ENCODE measurements at regions of chr11 and their contacts with region 1.

Region 1: DNA sequence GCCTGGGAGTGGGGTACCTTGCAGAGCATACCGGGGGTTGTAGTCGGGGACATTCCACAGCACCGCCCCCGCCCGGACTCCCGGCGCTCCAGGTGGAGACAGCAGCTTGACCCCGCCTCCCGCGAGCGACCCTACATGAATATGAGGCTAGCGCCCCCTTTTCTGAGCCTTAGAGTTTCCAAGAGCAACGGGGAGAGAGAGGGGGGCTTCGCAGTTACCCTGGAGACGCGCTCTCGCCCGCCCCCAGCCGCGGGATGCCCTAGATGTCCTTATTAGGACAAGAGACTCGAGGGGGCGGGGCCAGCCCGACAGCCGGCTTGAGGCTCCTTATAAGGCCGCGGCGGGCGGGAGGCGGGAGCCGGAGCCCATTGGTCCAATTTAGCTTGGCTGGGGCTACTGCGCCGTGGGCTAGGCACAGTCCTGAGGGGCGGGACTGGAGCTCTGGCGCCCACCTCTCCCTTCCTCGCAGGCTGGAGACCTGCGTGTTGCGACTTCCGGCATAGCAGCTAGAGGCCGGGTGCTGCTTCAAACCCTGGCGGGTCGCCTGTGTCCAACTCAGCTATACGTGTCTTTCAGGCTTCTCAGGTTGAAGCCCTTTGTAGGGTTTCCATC is 927 bp upstream of the MUS81 start:
- DNase-seq: peak; percentile 99
- ATAC-seq: peak; percentile 73
- H3K4me3 Mint-ChIP-seq: peak overlapping the region; percentile 91
- H3K27ac Mint-ChIP-seq: peak overlapping the region; percentile 99
- H3K4me1 Mint-ChIP-seq: peaks cover 42% of the 10 kb centered on the region
- H3K27me3 Mint-ChIP-seq: no peaks in the 10 kb centered on the region

Region 2: DNA sequence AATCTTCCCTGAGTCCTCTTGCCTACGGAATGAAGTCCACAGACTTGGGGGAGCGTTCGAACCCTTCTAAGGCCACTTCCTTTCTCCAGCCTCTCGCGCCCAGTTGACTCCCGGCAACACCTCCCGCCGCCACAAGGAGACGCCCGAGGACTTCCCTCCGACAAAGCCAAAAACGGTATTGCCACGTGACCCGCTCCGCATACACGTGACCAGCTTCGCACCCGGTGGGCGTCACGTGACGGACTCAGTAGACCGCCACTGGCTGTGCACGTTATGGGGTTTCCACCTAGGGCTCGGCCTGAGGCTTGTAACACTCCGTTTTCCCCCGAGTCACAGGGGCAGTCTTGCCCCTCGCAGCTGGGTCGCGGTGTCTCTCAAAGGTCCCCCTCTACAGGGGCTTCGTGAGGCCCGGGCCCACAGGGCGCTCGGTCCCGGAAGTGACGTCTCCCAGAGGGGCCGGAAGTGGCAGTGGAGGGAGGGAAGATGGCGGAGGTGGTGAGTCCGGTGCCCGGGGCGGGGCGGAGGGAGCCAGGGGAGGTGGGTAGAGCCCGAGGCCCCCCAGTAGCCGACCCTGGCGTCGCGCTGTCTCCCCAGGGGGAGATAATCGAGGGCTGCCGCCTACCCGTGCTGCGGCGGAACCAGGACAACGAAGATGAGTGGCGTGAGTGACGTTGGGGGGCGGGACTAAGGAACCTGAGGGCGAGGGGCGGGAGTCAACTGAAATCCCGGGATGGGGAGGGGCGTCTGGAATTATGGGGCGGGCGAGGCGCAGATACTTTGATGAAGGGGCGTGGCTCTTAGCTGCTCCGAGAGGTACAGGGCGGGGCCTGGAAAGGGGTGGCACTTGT is 147.3 kb before region 1 on chr11 and contains the start of gene KAT5:
- CTCF ChIA-PET with region 1: interaction called, 29 read pairs
- POLR2A ChIA-PET with region 1: interaction called, 6 read pairs
- intact Hi-C with region 1: loop called in 1 of 2 experiments (anchors 1 kb)
- DNase-seq: peak; percentile 99
- ATAC-seq: peak; percentile 86
- H3K4me3 Mint-ChIP-seq: peak within 1 kb of the TSS; percentile 90
- H3K27ac Mint-ChIP-seq: peak within 1 kb of the TSS; percentile 96
- H3K4me1 Mint-ChIP-seq: peaks cover 27% of the 10 kb centered on the region
- H3K27me3 Mint-ChIP-seq: no peaks in the 10 kb centered on the region
- total RNA-seq, gene KAT5: 56.5 to 65.1 TPM

Region 3: GRCh38 chr11:65833297-65834030 is 25.8 kb before region 1 on chr11 and contains the start of gene SNX32:
- CTCF ChIA-PET with region 1: interaction called, 10 read pairs
- POLR2A ChIA-PET with region 1: interaction called, 11 read pairs
- intact Hi-C with region 1: loop called (anchors 1 kb)
- DNase-seq: peak; percentile 98
- ATAC-seq: peak; percentile 99
- H3K4me3 Mint-ChIP-seq: no peak within 1 kb of the TSS
- H3K27ac Mint-ChIP-seq: no peak within 1 kb of the TSS
- H3K4me1 Mint-ChIP-seq: peaks cover 22% of the 10 kb centered on the region
- H3K27me3 Mint-ChIP-seq: no peaks in the 10 kb centered on the region
- total RNA-seq, gene SNX32: 2.9 to 3.0 TPM

Region 4: DNA sequence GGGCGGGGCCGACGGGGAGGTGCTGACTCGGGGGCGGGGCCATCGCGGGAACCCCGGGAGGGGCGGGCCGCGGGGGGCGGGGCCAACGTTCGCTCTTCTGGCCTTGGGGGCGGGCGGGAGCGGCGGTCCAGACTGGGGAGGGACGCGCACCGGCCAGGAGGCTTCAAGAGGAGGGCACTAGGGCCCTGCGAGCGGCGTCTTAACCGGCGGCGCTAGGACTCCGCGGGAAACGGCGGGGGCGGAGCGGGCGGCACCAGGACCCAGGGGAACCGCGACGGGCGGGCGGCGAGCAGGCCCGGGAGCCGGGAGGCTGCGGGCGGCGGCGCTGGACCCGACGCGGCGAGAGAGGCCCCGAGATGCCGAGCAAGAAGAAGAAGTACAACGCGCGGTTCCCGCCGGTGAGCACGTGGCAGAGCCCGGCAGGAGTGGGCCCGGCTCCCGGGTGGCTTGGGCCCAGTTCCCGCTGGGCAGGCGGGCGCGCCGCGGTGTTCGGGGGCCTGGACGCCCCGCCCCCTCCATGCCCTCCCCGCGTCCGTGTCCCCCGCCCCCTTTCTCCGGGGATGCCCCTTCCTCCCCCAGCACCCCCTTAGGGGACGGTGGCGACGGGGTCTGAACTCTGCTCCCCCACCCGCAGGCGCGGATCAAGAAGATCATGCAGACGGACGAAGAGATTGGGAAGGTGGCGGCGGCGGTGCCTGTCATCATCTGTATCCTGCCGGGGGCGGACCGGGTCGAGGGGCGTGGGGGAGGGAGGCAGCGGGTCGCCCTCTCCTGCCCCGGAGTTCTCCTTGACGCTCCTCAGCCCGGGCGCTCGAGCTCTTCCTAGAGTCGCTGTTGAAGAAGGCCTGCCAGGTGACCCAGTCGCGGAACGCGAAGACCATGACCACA is 60.1 kb after region 1 on chr11 and contains the start of gene DRAP1:
- CTCF ChIA-PET with region 1: interaction called, 5 read pairs
- POLR2A ChIA-PET with region 1: no interaction called
- intact Hi-C with region 1: loop called (anchors 1 to 2 kb)
- DNase-seq: peak; percentile 100
- ATAC-seq: peak; percentile 94
- H3K4me3 Mint-ChIP-seq: peak within 1 kb of the TSS; percentile 91
- H3K27ac Mint-ChIP-seq: peak within 1 kb of the TSS; percentile 88
- H3K4me1 Mint-ChIP-seq: peaks cover 35% of the 10 kb centered on the region
- H3K27me3 Mint-ChIP-seq: no peaks in the 10 kb centered on the region
- total RNA-seq, gene DRAP1: 111 to 158 TPM

Region 5: DNA sequence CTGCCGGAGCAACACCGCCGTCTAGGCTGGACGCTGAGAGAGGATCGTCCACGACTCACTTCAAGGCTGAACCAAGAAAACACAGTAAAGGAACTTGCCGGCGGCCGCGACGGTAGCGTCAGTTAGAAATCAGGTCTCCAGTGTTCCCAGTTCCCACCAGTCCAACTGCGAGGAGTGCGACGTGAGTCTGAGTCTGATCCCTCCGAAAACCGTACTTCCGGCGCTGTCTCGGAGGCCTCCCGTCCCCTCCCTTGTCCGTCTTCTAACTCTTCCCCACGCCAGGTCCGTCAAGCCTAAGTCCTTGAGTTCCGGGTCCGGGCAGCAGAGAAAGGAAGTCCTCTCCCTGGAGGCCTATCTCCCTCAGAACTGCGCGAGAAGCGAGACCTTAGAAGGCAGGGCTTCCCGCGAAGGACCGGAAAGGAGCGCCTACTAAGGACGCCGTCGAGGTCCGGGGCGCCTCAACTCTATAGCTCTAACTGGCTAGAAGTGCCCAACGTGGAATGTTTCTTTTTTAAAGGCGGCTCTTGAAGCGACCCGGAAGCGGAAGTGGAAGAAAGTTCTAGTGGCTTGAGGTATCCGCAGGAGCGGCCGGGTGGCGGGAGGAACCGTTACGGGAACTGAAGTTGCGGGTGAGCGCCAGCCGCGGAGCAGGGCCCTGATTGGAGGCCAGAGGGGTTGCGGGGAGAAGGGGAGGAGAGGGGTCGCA is 142.8 kb after region 1 on chr11 and contains the starts of genes BANF1 and EIF1AD:
- CTCF ChIA-PET with region 1: interaction called, 10 read pairs
- POLR2A ChIA-PET with region 1: interaction called, 4 read pairs
- intact Hi-C with region 1: loop called (anchors 1 kb)
- DNase-seq: peak; percentile 95
- ATAC-seq: peak; percentile 88
- H3K4me3 Mint-ChIP-seq: peak within 1 kb of the TSS; percentile 100
- H3K27ac Mint-ChIP-seq: peak within 1 kb of the TSS; percentile 98
- H3K4me1 Mint-ChIP-seq: peaks cover 36% of the 10 kb centered on the region
- H3K27me3 Mint-ChIP-seq: no peaks in the 10 kb centered on the region
- total RNA-seq, gene BANF1: 233 to 293 TPM
- total RNA-seq, gene EIF1AD: 45.1 to 52.2 TPM

Region 6: DNA sequence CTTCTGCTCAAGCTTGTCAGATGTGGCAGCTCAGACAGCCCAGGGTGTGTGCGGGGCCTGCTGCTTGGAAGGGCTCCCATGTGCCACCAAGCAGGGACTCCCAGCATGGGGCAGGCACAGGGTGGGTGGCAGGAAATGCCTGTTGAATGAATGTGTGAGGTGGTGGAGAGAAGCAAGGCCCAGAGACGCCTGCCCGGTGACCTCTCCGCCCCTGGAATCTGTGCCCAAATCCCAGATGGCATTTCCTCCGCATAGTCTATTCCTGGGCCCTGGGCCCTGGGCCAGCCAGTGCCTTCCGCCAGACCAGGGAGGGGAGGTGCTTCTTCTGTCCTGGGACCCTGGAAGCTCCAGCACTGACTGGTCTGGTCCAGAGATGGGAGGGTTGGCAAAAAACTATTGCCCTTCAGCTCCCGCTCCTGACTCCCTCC is 156.2 kb after region 1 on chr11:
- CTCF ChIA-PET with region 1: no interaction called
- POLR2A ChIA-PET with region 1: no interaction called
- intact Hi-C with region 1: no loop called
- DNase-seq: no peak
- ATAC-seq: no peak
- H3K4me3 Mint-ChIP-seq: no peak overlapping the region
- H3K27ac Mint-ChIP-seq: no peak overlapping the region
- H3K4me1 Mint-ChIP-seq: peaks cover 7% of the 10 kb centered on the region
- H3K27me3 Mint-ChIP-seq: peaks cover 16% of the 10 kb centered on the region

Region 7: GRCh38 chr11:66371627-66372415 is 512.5 kb after region 1 on chr11 and contains the start of gene SLC29A2:
- CTCF ChIA-PET with region 1: no interaction called
- POLR2A ChIA-PET with region 1: no interaction called
- intact Hi-C with region 1: loop called in 1 of 2 experiments (anchors 1 kb)
- DNase-seq: peak; percentile 92
- ATAC-seq: peak; percentile 87
- H3K4me3 Mint-ChIP-seq: peak within 1 kb of the TSS; percentile 91
- H3K27ac Mint-ChIP-seq: peak within 1 kb of the TSS; percentile 91
- H3K4me1 Mint-ChIP-seq: peaks cover 19% of the 10 kb centered on the region
- H3K27me3 Mint-ChIP-seq: no peaks in the 10 kb centered on the region
- total RNA-seq, gene SLC29A2: 13.6 to 14.4 TPM